ENCODE measurements at regions of chr12 and their contacts with region 1.

Region 1: DNA sequence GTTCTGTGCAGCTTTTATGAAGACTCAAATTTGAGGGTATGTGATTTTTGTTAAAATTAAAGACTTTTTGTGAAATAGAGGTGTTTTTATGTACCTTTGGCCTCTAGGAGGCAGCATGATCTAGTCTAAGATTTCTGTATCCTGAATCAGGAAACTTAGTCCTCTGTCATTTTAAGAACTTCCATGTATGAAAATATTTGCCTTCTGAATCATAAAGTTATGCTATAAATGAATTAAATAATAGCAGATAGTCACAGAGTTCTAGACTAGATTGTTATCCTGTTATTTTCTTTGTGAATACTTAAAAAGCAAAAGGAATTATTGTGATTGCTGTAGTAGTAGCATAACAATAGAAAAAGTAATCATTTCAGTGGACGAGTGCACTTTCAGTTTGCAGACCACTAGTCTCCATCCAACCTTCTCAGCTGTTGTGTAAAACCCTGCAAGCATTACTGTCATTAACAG is 56.3 kb downstream of the FGD4 start:
- DNase-seq: peak; percentile 91
- H3K4me3 ChIP-seq: peak overlapping the region; percentile 67
- H3K27ac ChIP-seq: peak overlapping the region; percentile 73
- H3K4me1 ChIP-seq: peaks cover 24% of the 10 kb centered on the region
- CTCF ChIP-seq: peak; percentile 98

Region 2: DNA sequence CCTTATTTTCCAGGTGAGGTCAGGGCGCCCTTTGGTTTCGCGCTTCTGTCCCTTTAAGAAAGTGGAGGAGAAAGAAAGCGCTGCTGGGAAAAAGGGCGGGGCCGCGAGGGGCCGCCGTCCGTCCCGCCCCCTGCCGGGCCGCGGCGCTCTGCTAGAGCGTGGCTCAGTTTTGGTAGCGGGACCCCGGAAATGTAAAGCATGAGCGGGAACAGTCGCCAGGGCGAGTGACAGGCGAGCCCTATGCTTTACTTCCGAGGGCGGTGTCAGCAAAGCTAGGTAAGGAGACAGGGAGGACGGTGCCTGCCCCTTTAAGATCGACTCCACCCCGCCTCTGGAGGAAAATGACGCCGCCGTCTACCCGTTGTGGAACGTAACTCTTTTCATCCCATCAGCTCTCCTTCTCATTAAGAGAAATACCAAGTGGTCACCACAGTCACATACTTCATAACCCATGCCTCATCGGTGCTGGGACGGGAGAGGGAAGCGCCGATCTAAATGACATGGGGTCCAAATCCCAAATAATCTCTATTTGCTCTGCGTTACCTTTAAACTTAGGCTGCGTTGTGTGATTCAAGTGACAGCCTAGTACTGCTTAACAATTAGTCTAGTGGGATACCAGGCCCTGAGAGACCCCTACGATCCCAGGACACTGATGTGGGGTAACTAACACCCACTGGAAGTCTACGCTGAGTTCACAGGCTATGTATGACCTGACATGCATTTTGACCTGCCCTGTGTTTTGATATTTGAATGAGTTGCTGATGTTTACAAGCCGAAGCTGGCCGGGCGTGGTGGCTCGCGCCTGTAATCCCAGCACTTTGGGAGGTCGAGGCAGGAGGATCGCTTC is 796.3 kb before region 1 on chr12 and contains the start of gene ETFBKMT:
- CTCF ChIA-PET with region 1: no interaction called
- POLR2A ChIA-PET with region 1: interaction called, 3 read pairs
- intact Hi-C with region 1: loop called (anchors 10 kb)
- DNase-seq: peak; percentile 99
- H3K4me3 ChIP-seq: peak within 1 kb of the TSS; percentile 86
- H3K27ac ChIP-seq: peak within 1 kb of the TSS; percentile 86
- H3K4me1 ChIP-seq: peaks cover 20% of the 10 kb centered on the region
- CTCF ChIP-seq: peak; percentile 65
- total RNA-seq, gene ETFBKMT: 0.54 and 0.92 TPM in 2 replicates

Region 3: GRCh38 chr12:32399337-32400113 is 56.1 kb before region 1 on chr12 and contains the start of gene FGD4:
- CTCF ChIA-PET with region 1: no interaction called
- POLR2A ChIA-PET with region 1: no interaction called
- intact Hi-C with region 1: no loop called
- DNase-seq: peak; percentile 88
- H3K4me3 ChIP-seq: peak within 1 kb of the TSS; percentile 73
- H3K27ac ChIP-seq: peak within 1 kb of the TSS; percentile 25
- H3K4me1 ChIP-seq: peaks cover 41% of the 10 kb centered on the region
- CTCF ChIP-seq: peak; percentile 83
- total RNA-seq, gene FGD4: 19.3 and 21.8 TPM in 2 replicates

Region 4: GRCh38 chr12:32419520-32419960 is 36.1 kb before region 1 on chr12:
- CTCF ChIA-PET with region 1: no interaction called
- POLR2A ChIA-PET with region 1: no interaction called
- intact Hi-C with region 1: no loop called
- DNase-seq: no peak
- H3K4me3 ChIP-seq: no peak overlapping the region
- H3K27ac ChIP-seq: no peak overlapping the region
- H3K4me1 ChIP-seq: no peaks in the 10 kb centered on the region
- CTCF ChIP-seq: no peak

Region 5: GRCh38 chr12:32482226-32482625 is 26.6 kb after region 1 on chr12:
- CTCF ChIA-PET with region 1: interaction called, 3 read pairs
- POLR2A ChIA-PET with region 1: interaction called, 23 read pairs
- intact Hi-C with region 1: no loop called
- DNase-seq: peak; percentile 87
- H3K4me3 ChIP-seq: peak overlapping the region; percentile 57
- H3K27ac ChIP-seq: peak overlapping the region; percentile 83
- H3K4me1 ChIP-seq: peaks cover 78% of the 10 kb centered on the region
- CTCF ChIP-seq: no peak

Region 6: GRCh38 chr12:32533971-32534590 is 78.4 kb after region 1 on chr12:
- CTCF ChIA-PET with region 1: interaction called, 6 read pairs
- POLR2A ChIA-PET with region 1: interaction called, 18 read pairs
- intact Hi-C with region 1: loop called (anchors 2 kb)
- DNase-seq: peak; percentile 85
- H3K4me3 ChIP-seq: peak overlapping the region; percentile 74
- H3K27ac ChIP-seq: peak overlapping the region; percentile 67
- H3K4me1 ChIP-seq: peaks cover 48% of the 10 kb centered on the region
- CTCF ChIP-seq: no peak

Region 7: DNA sequence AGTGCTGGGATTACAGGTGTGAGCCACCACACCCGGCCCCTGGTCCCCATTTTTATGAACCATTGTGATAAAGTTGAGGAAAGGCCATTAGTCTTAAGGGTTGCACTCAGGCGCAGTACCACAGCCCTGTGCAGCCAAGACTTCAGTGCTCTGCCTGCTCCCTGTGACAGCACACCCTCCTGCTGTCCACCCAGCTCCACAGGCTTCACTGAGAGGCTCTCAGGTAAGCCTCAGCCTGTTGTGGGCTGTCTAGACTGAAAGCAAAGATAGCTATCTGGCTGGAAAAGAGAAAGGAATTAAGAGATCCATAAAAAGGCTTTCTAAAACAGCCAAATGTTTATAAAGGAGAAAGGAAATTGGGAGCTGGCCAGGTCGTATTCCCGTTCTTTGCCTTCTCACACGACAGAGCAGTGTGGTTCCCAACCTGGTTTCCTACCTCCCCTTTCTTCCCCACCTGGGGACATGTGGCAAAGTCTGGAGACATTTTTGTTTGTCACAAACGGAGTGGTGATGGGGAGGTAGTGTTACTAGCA is 204.3 kb after region 1 on chr12:
- CTCF ChIA-PET with region 1: interaction called, 5 read pairs
- POLR2A ChIA-PET with region 1: no interaction called
- intact Hi-C with region 1: loop called (anchors 1 kb)
- DNase-seq: no peak
- H3K4me3 ChIP-seq: no peak overlapping the region
- H3K27ac ChIP-seq: no peak overlapping the region
- H3K4me1 ChIP-seq: peaks cover 6% of the 10 kb centered on the region
- CTCF ChIP-seq: no peak

Region 8: GRCh38 chr12:32755654-32756475 is 300.2 kb after region 1 on chr12 and contains the start of gene YARS2:
- CTCF ChIA-PET with region 1: interaction called, 6 read pairs
- POLR2A ChIA-PET with region 1: interaction called, 12 read pairs
- intact Hi-C with region 1: loop called (anchors 1 kb)
- DNase-seq: peak; percentile 99
- H3K4me3 ChIP-seq: peak within 1 kb of the TSS; percentile 85
- H3K27ac ChIP-seq: peak within 1 kb of the TSS; percentile 75
- H3K4me1 ChIP-seq: peaks cover 22% of the 10 kb centered on the region
- CTCF ChIP-seq: peak; percentile 99
- total RNA-seq, gene YARS2: 39.0 and 42.8 TPM in 2 replicates